ENCODE measurements at regions of chr12 and their contacts with region 1.

Region 1: GRCh38 chr12:50763639-50764285 is at the start of gene ATF1:
- DNase-seq: peak; percentile 79
- ATAC-seq: peak; percentile 83
- H3K4me3 ChIP-seq: peak within 1 kb of the TSS; percentile 88 to 89
- H3K27ac ChIP-seq: peak within 1 kb of the TSS; percentile 100
- H3K4me1 ChIP-seq: peaks cover 25 to 36% of the 10 kb centered on the region in 2 experiments
- H3K27me3 ChIP-seq: no peaks in the 10 kb centered on the region
- CTCF ChIP-seq: no peak
- POLR2A ChIP-seq: peak; percentile 60
- RAD21 ChIP-seq: no peak
- total RNA-seq, gene ATF1: 48.8 TPM

Region 2: GRCh38 chr12:50620109-50620977 is 143.4 kb before region 1 on chr12:
- CTCF ChIA-PET with region 1: no interaction called
- POLR2A ChIA-PET with region 1: no interaction called
- RAD21 ChIA-PET with region 1: no interaction called
- intact Hi-C with region 1: no loop called
- DNase-seq: no peak
- ATAC-seq: peak; percentile 69
- H3K4me3 ChIP-seq: no peak overlapping the region
- H3K27ac ChIP-seq: peak overlapping the region; percentile 44
- H3K4me1 ChIP-seq: peaks cover 48 to 57% of the 10 kb centered on the region in 2 experiments
- H3K27me3 ChIP-seq: no peaks in the 10 kb centered on the region
- CTCF ChIP-seq: no peak
- POLR2A ChIP-seq: no peak
- RAD21 ChIP-seq: peak; percentile 13; the same call in 1 of the 2 replicates

Region 3: GRCh38 chr12:50718760-50719159 is 45.0 kb before region 1 on chr12:
- CTCF ChIA-PET with region 1: no interaction called
- POLR2A ChIA-PET with region 1: no interaction called
- RAD21 ChIA-PET with region 1: no interaction called
- intact Hi-C with region 1: no loop called
- DNase-seq: no peak
- ATAC-seq: no peak
- H3K4me3 ChIP-seq: no peak overlapping the region
- H3K27ac ChIP-seq: no peak overlapping the region
- H3K4me1 ChIP-seq: no peaks in the 10 kb centered on the region
- H3K27me3 ChIP-seq: no peaks in the 10 kb centered on the region
- CTCF ChIP-seq: no peak
- POLR2A ChIP-seq: no peak
- RAD21 ChIP-seq: no peak

Region 4: DNA sequence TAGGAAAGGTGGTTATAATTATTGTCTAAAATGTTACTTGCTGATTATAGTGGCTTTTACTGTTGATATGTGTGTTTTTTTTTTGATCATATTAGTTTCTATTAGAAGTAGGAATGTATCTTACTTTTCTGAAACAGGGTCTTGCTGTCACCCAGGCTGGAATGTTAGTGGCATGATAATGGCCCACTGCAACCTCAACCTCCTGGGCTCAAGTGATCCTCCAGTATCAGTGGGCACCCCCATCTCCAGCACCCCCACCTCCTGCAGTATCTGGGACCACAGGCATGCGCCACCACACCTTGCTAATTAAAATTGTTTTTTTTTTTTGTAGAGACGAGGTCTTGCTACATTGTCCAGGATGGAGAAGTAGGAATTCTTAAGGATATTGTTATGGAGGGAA is 11.5 kb after region 1 on chr12:
- CTCF ChIA-PET with region 1: interaction called, 20 read pairs
- POLR2A ChIA-PET with region 1: interaction called, 18 read pairs
- RAD21 ChIA-PET with region 1: interaction called, 3 to 6 read pairs
- intact Hi-C with region 1: no loop called
- DNase-seq: no peak
- ATAC-seq: no peak
- H3K4me3 ChIP-seq: no peak overlapping the region
- H3K27ac ChIP-seq: peak overlapping the region; percentile 89
- H3K4me1 ChIP-seq: peaks cover 35 to 42% of the 10 kb centered on the region in 2 experiments
- H3K27me3 ChIP-seq: no peaks in the 10 kb centered on the region
- CTCF ChIP-seq: no peak
- POLR2A ChIP-seq: no peak
- RAD21 ChIP-seq: no peak

Region 5: DNA sequence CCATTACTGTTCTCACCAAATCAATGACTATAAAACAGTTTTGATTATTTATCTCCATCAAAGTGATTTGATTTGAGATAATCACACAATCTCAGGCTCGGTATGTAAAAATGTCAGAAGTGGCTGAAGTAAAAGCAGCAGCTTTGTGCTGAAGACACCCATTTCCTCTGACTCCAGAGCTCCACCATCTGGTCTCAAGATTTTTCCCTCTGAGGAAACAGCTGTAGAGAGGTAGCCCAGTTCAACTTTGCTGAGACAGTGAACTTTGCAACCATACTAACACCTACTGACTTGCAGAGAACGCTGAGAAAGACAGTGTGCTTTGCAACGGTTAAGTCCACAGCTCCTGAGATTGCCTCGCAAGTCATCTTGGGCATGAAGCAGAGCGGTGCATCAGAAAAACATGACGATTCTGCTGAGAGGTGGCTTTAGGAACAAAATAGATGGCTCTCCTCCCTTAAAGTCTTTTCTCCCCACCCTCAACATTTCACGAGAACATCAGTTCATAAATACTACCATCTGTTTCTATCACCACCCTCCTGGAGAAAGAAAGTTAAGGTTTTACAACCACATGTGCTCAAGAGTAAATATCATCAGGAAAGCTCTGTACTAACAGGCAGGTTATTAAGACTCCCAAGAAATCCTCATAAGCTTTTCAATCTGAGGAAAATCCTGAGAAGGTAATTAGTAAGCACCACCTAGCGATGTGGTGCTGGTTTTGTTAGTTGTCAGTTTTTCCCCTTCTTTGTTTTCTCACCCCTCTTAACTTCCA is 223.4 kb after region 1 on chr12:
- CTCF ChIA-PET with region 1: interaction called, 33 read pairs
- POLR2A ChIA-PET with region 1: interaction called, 3 read pairs
- RAD21 ChIA-PET with region 1: interaction called in 1 of 2 experiments, 4 read pairs
- intact Hi-C with region 1: loop called (anchors 1 kb)
- DNase-seq: peak; percentile 15
- ATAC-seq: peak; percentile 69
- H3K4me3 ChIP-seq: no peak overlapping the region
- H3K27ac ChIP-seq: no peak overlapping the region
- H3K4me1 ChIP-seq: peaks cover 0 to 6% of the 10 kb centered on the region in 2 experiments; a peak in 1 of 4 replicates
- H3K27me3 ChIP-seq: no peaks in the 10 kb centered on the region
- CTCF ChIP-seq: peak; percentile 35 to 61 (median 49); a peak in 4 of 6 replicates
- POLR2A ChIP-seq: no peak
- RAD21 ChIP-seq: peak; percentile 74

Region 6: GRCh38 chr12:51025836-51026638 is 262.3 kb after region 1 on chr12 and contains the start of gene SLC11A2:
- CTCF ChIA-PET with region 1: interaction called, 25 read pairs
- POLR2A ChIA-PET with region 1: interaction called, 15 read pairs
- RAD21 ChIA-PET with region 1: interaction called in 1 of 2 experiments, 3 read pairs
- intact Hi-C with region 1: loop called (anchors 2 kb)
- DNase-seq: peak; percentile 86
- ATAC-seq: peak; percentile 93
- H3K4me3 ChIP-seq: peak within 1 kb of the TSS; percentile 76 to 77
- H3K27ac ChIP-seq: peak within 1 kb of the TSS; percentile 91
- H3K4me1 ChIP-seq: peaks cover 27 to 49% of the 10 kb centered on the region in 2 experiments
- H3K27me3 ChIP-seq: no peaks in the 10 kb centered on the region
- CTCF ChIP-seq: no peak
- POLR2A ChIP-seq: peak; percentile 90
- RAD21 ChIP-seq: no peak
- total RNA-seq, gene SLC11A2: 38.7 TPM

Region 7: GRCh38 chr12:51047655-51048540 is 284.1 kb after region 1 on chr12 and contains the start of gene LETMD1:
- CTCF ChIA-PET with region 1: interaction called, 3 read pairs
- POLR2A ChIA-PET with region 1: no interaction called
- RAD21 ChIA-PET with region 1: no interaction called
- intact Hi-C with region 1: loop called (anchors 5 kb)
- DNase-seq: peak; percentile 99
- ATAC-seq: peak; percentile 99
- H3K4me3 ChIP-seq: peak within 1 kb of the TSS; percentile 71 to 88
- H3K27ac ChIP-seq: peak within 1 kb of the TSS; percentile 84
- H3K4me1 ChIP-seq: peaks cover 7 to 18% of the 10 kb centered on the region in 2 experiments; a peak in 2 of 4 replicates
- H3K27me3 ChIP-seq: no peaks in the 10 kb centered on the region
- CTCF ChIP-seq: peak; percentile 84 to 88 (median 87)
- POLR2A ChIP-seq: peak; percentile 75
- RAD21 ChIP-seq: peak; percentile 89
- total RNA-seq, gene LETMD1: 70.8 TPM

Region 8: DNA sequence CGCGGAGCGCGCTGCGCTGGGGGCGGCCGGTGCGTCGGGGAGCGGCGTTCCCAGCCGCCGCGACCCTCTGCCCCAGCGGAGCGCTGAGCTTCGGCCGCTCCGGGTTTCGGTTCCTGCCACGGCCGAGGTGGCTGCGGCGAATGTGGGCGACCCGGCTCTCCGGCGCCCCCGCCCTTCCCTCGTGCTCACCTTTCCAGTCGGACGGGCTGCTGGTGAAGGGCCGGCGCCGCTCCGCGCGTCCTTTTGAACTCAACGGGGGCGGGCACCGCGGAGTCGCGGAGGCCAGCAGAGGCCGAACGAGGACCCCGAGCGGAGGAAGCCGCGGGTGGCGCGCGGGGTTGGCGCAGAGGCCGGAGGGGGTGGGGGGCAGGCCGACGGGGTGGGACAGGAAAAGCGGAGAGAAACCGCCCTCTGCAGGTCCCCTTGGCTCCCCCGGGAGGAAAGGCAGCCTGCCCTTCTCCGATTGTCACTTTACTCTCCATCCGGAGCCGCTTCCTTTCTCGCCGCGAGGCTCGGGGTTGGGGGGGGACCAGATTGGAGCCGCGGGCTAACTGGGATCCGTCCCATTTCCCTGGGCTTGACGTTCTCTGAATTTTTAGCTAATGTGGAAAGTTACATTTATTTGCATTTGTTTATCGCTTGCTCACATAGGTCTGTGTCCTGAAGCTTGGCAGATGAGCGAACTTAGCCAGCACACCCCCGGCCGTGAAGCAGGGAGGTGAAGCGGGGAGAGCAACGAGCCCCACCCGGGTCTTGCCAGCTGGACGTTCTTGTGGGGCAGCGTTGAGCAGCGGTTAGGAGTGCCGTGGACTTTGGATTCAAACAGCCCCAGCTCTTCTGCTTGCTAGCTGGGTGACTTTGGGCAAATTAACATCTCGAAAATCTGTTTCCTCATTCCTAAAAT is 506.6 kb after region 1 on chr12 and contains the start of gene SMAGP:
- CTCF ChIA-PET with region 1: no interaction called
- POLR2A ChIA-PET with region 1: no interaction called
- RAD21 ChIA-PET with region 1: no interaction called
- intact Hi-C with region 1: loop called (anchors 10 kb)
- DNase-seq: no peak
- ATAC-seq: peak; percentile 64
- H3K4me3 ChIP-seq: peak within 1 kb of the TSS; percentile 69 to 75
- H3K27ac ChIP-seq: peak within 1 kb of the TSS; percentile 76
- H3K4me1 ChIP-seq: peaks cover 10 to 44% of the 10 kb centered on the region in 2 experiments
- H3K27me3 ChIP-seq: no peaks in the 10 kb centered on the region
- CTCF ChIP-seq: no peak
- POLR2A ChIP-seq: peak; percentile 25
- RAD21 ChIP-seq: no peak
- total RNA-seq, gene SMAGP: 39.9 TPM